T-cell (primary cell): ENCODE measurements at regions of chr11 and their contacts with region 1.

Region 1: DNA sequence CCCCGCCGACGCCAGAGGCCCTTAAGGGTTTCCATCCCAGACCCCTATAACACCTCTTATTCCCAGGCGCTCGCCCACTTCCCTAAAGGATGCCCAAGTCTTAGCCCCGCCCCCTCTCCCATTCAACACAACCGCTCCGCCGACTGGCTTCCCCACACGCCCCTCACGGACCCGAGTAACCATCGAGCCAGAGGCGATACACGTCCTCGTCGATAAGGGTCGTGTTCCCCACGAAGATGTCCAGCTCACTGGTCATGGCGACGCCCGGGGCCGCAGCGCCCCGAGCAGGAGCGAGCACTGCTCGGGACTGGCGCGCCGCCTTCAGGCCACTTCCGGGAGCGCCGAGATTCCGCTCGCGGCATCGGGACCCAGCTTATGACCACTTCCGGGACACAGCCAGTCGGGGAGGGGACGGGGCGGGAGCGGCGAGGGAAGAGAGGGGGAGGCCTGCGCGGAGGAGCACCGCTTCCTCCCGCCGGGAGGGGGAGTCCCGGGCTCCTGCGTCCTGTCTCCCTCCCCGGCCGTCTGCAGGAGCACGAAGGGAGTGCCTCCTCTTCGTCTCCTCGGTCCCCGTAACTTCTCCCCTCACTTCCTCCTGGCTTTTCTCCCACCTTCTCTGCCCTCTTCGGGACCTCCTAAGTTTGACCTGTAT is at the start of gene FIBP:
- DNase-seq: peak; percentile 89 to 96 (median 94)
- ATAC-seq: peak; percentile 66 to 68 (median 67)
- H3K4me3 ChIP-seq: peak within 1 kb of the TSS; percentile 78 to 92
- H3K4me3 Mint-ChIP-seq: peak within 1 kb of the TSS; percentile 85 to 94 (median 92)
- H3K27ac ChIP-seq: peak within 1 kb of the TSS; percentile 91
- H3K27ac Mint-ChIP-seq: peak within 1 kb of the TSS; percentile 93 to 99
- H3K4me1 ChIP-seq: peaks cover 23 to 65% of the 10 kb centered on the region in 2 experiments
- H3K4me1 Mint-ChIP-seq: peaks cover 67 to 75% (median 70%) of the 10 kb centered on the region in 3 donors
- H3K27me3 ChIP-seq: no peaks in the 10 kb centered on the region
- H3K27me3 Mint-ChIP-seq: no peaks in the 10 kb centered on the region
- total RNA-seq, gene FIBP: 30.2 to 47.1 (median 39.2) TPM

Region 2: DNA sequence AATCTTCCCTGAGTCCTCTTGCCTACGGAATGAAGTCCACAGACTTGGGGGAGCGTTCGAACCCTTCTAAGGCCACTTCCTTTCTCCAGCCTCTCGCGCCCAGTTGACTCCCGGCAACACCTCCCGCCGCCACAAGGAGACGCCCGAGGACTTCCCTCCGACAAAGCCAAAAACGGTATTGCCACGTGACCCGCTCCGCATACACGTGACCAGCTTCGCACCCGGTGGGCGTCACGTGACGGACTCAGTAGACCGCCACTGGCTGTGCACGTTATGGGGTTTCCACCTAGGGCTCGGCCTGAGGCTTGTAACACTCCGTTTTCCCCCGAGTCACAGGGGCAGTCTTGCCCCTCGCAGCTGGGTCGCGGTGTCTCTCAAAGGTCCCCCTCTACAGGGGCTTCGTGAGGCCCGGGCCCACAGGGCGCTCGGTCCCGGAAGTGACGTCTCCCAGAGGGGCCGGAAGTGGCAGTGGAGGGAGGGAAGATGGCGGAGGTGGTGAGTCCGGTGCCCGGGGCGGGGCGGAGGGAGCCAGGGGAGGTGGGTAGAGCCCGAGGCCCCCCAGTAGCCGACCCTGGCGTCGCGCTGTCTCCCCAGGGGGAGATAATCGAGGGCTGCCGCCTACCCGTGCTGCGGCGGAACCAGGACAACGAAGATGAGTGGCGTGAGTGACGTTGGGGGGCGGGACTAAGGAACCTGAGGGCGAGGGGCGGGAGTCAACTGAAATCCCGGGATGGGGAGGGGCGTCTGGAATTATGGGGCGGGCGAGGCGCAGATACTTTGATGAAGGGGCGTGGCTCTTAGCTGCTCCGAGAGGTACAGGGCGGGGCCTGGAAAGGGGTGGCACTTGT is 176.3 kb before region 1 on chr11 and contains the start of gene KAT5:
- CTCF ChIA-PET with region 1: interaction called, 4 to 12 read pairs
- POLR2A ChIA-PET with region 1: no interaction called
- DNase-seq: peak; percentile 96 to 99 (median 97)
- ATAC-seq: peak; percentile 87 to 88 (median 88)
- H3K4me3 ChIP-seq: peak within 1 kb of the TSS; percentile 87
- H3K4me3 Mint-ChIP-seq: peak within 1 kb of the TSS; percentile 88 to 92 (median 91)
- H3K27ac ChIP-seq: peak within 1 kb of the TSS; percentile 97
- H3K27ac Mint-ChIP-seq: peak within 1 kb of the TSS; percentile 98 to 99
- H3K4me1 ChIP-seq: peaks cover 7 to 27% of the 10 kb centered on the region in 2 experiments
- H3K4me1 Mint-ChIP-seq: peaks cover 25 to 27% (median 26%) of the 10 kb centered on the region in 3 donors
- H3K27me3 ChIP-seq: peaks cover 0 to 6% of the 10 kb centered on the region in 2 experiments
- H3K27me3 Mint-ChIP-seq: no peaks in the 10 kb centered on the region
- total RNA-seq, gene KAT5: 99.9 to 111 (median 104) TPM

Region 3: DNA sequence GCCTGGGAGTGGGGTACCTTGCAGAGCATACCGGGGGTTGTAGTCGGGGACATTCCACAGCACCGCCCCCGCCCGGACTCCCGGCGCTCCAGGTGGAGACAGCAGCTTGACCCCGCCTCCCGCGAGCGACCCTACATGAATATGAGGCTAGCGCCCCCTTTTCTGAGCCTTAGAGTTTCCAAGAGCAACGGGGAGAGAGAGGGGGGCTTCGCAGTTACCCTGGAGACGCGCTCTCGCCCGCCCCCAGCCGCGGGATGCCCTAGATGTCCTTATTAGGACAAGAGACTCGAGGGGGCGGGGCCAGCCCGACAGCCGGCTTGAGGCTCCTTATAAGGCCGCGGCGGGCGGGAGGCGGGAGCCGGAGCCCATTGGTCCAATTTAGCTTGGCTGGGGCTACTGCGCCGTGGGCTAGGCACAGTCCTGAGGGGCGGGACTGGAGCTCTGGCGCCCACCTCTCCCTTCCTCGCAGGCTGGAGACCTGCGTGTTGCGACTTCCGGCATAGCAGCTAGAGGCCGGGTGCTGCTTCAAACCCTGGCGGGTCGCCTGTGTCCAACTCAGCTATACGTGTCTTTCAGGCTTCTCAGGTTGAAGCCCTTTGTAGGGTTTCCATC is 29.0 kb before region 1 on chr11:
- CTCF ChIA-PET with region 1: interaction called, 5 to 167 read pairs
- POLR2A ChIA-PET with region 1: interaction called, 5 to 20 read pairs
- DNase-seq: peak; percentile 89 to 98 (median 95)
- ATAC-seq: peak; percentile 59 to 64 (median 62)
- H3K4me3 ChIP-seq: peak overlapping the region; percentile 90 to 93
- H3K4me3 Mint-ChIP-seq: peak overlapping the region; percentile 92 to 97 (median 97)
- H3K27ac ChIP-seq: peak overlapping the region; percentile 83
- H3K27ac Mint-ChIP-seq: peak overlapping the region; percentile 95 to 97
- H3K4me1 ChIP-seq: peaks cover 22 to 77% of the 10 kb centered on the region in 2 experiments
- H3K4me1 Mint-ChIP-seq: peaks cover 48 to 58% (median 56%) of the 10 kb centered on the region in 3 donors
- H3K27me3 ChIP-seq: no peaks in the 10 kb centered on the region
- H3K27me3 Mint-ChIP-seq: no peaks in the 10 kb centered on the region

Region 4: DNA sequence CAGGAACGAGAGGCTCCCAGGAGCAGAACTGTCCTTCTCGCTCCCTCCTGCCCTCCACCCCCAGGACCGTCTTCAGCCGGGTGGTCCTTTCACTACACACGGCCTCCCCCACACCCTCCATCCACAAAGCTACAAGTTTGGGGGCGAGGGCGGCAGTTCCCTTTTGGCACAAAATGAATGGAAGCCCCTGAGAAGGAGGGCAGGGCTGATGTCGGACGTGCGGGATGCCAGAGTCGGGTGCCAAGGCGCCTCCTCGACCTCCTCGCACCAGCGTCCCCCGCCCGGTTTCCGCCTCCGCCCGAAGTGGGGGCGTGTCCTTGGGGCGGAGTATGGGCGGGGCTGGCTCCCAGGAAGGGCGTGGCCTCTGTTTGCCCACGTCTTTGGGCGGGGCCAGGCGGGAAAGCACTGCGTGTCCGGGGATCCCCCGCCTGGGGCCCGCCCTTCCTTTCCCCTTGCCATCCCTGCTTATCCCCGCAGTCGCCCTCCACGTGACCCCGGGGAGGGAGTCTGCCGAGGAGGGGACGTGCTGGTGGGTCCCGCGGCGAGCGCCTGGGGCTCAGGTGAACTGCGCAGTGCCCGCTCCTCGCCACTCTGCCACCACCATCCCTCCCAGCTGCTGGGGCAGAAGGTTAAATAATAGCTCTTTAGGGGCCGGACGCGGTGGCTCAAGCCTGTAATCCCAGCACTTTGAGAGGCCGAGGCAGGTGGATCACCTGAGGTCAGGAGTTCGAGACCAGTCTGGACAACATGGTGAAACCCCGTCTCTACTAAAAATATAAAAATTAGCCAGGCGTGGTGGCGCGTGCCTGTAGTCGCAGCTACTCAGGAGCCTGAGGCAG is 14.8 kb before region 1 on chr11:
- CTCF ChIA-PET with region 1: interaction called, 3 to 30 read pairs
- POLR2A ChIA-PET with region 1: interaction called in 1 of 2 experiments, 3 read pairs
- DNase-seq: peak; percentile 86 to 99 (median 93)
- ATAC-seq: peak; percentile 87 to 95 (median 93)
- H3K4me3 ChIP-seq: peak overlapping the region; percentile 67 to 77
- H3K4me3 Mint-ChIP-seq: peak overlapping the region; percentile 80 to 91 (median 87)
- H3K27ac ChIP-seq: peak overlapping the region; percentile 92
- H3K27ac Mint-ChIP-seq: peak overlapping the region; percentile 61 to 89
- H3K4me1 ChIP-seq: peaks cover 5 to 51% of the 10 kb centered on the region in 2 experiments
- H3K4me1 Mint-ChIP-seq: peaks cover 14 to 38% (median 21%) of the 10 kb centered on the region in 3 donors
- H3K27me3 ChIP-seq: peaks cover 0 to 7% of the 10 kb centered on the region in 2 experiments
- H3K27me3 Mint-ChIP-seq: no peaks in the 10 kb centered on the region

Region 5: DNA sequence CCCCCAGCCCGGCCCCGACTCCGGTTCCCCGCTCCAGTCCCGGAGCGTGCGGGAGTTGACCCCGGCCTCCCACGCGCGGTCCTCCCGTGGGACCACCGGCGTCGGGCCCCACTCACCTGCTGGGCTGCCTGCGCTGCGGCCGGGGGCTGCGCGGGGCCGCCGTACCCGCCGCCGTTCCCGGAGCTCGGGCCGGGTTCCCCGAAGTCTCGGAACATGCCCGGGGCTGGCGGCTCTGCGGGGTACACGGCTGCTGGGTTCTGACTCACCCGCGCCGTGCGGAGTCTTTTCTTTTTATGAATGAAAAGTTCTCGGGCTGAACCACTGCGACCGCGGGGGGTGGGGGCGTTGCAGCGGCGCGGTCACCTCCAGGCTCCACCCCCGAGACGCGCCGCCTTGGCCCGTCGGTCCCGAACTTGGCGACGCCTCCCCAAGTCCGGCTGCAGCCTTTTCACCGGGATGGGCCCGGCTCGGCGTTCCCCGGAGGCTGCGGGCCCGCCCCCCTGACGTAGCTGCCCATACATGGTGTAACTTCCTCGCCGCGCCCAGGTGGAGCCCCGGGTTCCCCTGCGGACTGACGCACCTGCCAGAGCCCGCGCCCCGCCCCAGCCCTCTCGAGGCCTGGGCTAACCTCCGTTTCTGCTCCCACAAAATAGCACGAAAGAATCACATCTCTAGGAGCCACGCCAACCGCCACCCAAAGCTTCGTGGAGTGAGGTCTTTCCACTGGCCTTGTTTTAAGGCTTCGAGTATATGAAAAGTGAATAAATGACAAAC is 12.0 kb after region 1 on chr11 and contains the start of gene FOSL1:
- CTCF ChIA-PET with region 1: interaction called, 4 to 22 read pairs
- POLR2A ChIA-PET with region 1: interaction called, 8 to 13 read pairs
- DNase-seq: peak; percentile 64 to 96 (median 89)
- ATAC-seq: peak; percentile 91 to 97 (median 94)
- H3K4me3 ChIP-seq: peak within 1 kb of the TSS; percentile 39 to 65
- H3K4me3 Mint-ChIP-seq: peak within 1 kb of the TSS; percentile 61 to 74 (median 64)
- H3K27ac ChIP-seq: peak within 1 kb of the TSS; percentile 47
- H3K27ac Mint-ChIP-seq: peak within 1 kb of the TSS in 1 of 2 donors; percentile 76
- H3K4me1 ChIP-seq: peaks cover 7 to 33% of the 10 kb centered on the region in 2 experiments
- H3K4me1 Mint-ChIP-seq: peaks cover 5 to 19% (median 6%) of the 10 kb centered on the region in 3 donors
- H3K27me3 ChIP-seq: peaks cover 0 to 34% of the 10 kb centered on the region in 2 experiments
- H3K27me3 Mint-ChIP-seq: peaks cover 0 to 3% of the 10 kb centered on the region in 2 donors
- total RNA-seq, gene FOSL1: 0.49 to 1.6 (median 0.65) TPM

Region 6: GRCh38 chr11:65912840-65913239 is 24.6 kb after region 1 on chr11:
- CTCF ChIA-PET with region 1: no interaction called
- POLR2A ChIA-PET with region 1: no interaction called
- DNase-seq: no peak
- ATAC-seq: no peak
- H3K4me3 ChIP-seq: no peak overlapping the region
- H3K4me3 Mint-ChIP-seq: no peak overlapping the region
- H3K27ac ChIP-seq: no peak overlapping the region
- H3K27ac Mint-ChIP-seq: no peak overlapping the region
- H3K4me1 ChIP-seq: peaks cover 12 to 37% of the 10 kb centered on the region in 2 experiments
- H3K4me1 Mint-ChIP-seq: peaks cover 24 to 33% (median 32%) of the 10 kb centered on the region in 3 donors
- H3K27me3 ChIP-seq: peaks cover 0 to 24% of the 10 kb centered on the region in 2 experiments
- H3K27me3 Mint-ChIP-seq: peaks cover 0 to 4% of the 10 kb centered on the region in 2 donors

Region 7: DNA sequence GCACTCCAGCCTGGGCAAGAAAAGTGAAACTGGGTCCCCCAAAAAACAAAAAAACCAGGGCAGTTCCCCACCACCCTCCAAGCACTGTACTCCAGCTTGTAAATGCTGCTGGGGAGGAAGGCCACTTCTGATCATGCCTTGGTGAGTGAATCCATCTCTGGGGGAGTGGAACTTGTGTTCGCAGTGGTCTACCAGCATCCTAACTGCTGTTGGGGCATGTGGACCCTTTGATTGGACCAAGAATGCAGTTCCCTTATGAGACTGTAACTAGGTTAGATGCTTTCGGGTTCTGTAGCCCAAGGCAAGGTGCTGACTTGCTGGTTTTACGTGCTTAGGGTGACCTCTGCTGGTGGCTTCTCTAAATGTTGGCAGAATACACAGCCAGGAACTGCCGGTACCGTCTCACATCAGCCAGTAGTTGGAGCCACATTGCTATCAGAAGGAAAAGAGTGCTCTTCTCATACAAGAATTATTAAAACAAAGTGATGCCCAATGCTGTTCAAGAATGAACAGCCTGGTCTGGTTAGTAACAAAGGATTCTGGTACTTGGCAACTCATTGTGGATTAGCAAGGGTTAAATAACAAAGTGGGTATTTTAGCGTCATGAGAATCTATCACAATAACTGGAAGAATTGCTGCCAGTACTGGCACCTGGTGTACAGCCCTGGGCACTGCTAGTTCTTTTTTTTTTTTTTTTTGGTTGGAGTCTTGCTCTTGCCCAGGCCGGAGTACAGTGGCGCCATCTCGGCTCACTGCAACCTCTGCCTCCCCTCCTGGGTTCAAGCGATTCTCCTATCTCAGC is 100.7 kb after region 1 on chr11:
- CTCF ChIA-PET with region 1: interaction called, 4 to 11 read pairs
- POLR2A ChIA-PET with region 1: interaction called in 1 of 2 experiments, 8 read pairs
- DNase-seq: peak; percentile 77 to 97 (median 90)
- ATAC-seq: peak; percentile 97 to 100 (median 99)
- H3K4me3 ChIP-seq: no peak overlapping the region
- H3K4me3 Mint-ChIP-seq: no peak overlapping the region
- H3K27ac ChIP-seq: peak overlapping the region; percentile 44
- H3K27ac Mint-ChIP-seq: peak overlapping the region; percentile 74 to 82
- H3K4me1 ChIP-seq: peaks cover 0 to 8% of the 10 kb centered on the region in 2 experiments
- H3K4me1 Mint-ChIP-seq: peaks cover 5 to 7% (median 5%) of the 10 kb centered on the region in 3 donors
- H3K27me3 ChIP-seq: no peaks in the 10 kb centered on the region
- H3K27me3 Mint-ChIP-seq: no peaks in the 10 kb centered on the region

Region 8: GRCh38 chr11:66001942-66002647 is 113.8 kb after region 1 on chr11 and contains the starts of genes BANF1 and EIF1AD:
- CTCF ChIA-PET with region 1: interaction called in 1 of 2 experiments, 8 read pairs
- POLR2A ChIA-PET with region 1: interaction called in 1 of 2 experiments, 10 read pairs
- DNase-seq: peak; percentile 84 to 97 (median 90)
- ATAC-seq: peak; percentile 82 to 86 (median 82)
- H3K4me3 ChIP-seq: peak within 1 kb of the TSS; percentile 82 to 92
- H3K4me3 Mint-ChIP-seq: peak within 1 kb of the TSS; percentile 95 to 100 (median 99)
- H3K27ac ChIP-seq: peak within 1 kb of the TSS; percentile 77
- H3K27ac Mint-ChIP-seq: peak within 1 kb of the TSS; percentile 99 to 100
- H3K4me1 ChIP-seq: peaks cover 5 to 27% of the 10 kb centered on the region in 2 experiments
- H3K4me1 Mint-ChIP-seq: peaks cover 28 to 50% (median 46%) of the 10 kb centered on the region in 3 donors
- H3K27me3 ChIP-seq: no peaks in the 10 kb centered on the region
- H3K27me3 Mint-ChIP-seq: no peaks in the 10 kb centered on the region
- total RNA-seq, gene BANF1: 70.9 to 101 (median 82.6) TPM
- total RNA-seq, gene EIF1AD: 50.7 to 114 (median 58.8) TPM